A549 (cell line): ENCODE measurements at regions of chr19 and their contacts with region 1.

Region 1: DNA sequence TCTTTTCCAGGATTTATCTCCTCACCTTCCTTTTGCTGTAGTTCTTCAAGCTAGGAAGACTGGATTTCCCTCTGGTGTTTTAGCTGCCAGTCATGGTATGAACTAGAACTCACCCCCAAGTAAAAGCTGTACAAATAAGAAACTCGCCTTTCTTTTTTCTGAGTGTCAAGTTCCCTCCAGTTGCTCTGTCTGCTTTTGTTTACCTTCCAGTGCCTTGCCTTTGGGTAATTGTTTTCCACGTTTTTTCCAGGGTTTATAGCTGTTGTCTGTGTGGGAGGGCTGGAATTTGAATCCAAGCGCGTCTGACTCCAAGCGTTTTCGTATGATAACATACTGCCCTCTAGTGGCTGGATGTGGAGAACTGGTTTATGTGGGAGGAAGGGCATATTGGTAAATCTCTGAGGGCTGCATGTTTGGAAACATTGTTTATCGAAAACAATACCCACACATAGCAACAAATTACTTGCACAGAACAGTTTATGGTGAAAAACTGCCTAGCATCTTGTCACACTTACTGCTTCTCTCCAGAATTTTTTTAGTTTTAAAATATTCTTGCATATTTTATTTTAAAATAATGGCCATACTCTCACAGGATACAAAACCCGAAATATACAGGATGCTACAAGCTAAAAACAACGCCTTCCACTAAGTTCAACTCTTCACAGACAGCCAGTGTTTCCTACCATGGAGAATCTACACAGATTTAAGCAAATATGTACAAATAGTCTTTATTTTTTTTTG is 19.2 kb downstream of the RCN3 start:
- DNase-seq: peak; percentile 91 to 94
- ATAC-seq: peak; percentile 88 to 89
- H3K4me3 ChIP-seq: peak overlapping the region; percentile 23; the same call in 1 of the 3 replicates
- H3K27ac ChIP-seq: peak overlapping the region in 1 of 2 experiments; percentile 29; a peak in 3 of 6 replicates
- H3K4me1 ChIP-seq: 0 out of 3 replicates have a peak, but pooled peaks cover 3% of the 10 kb centered on the region
- CTCF ChIP-seq: peak; percentile 97
- EP300 ChIP-seq: no peak
- POLR2A ChIP-seq: no peak
- RAD21 ChIP-seq: peak; percentile 94 to 98

Region 2: DNA sequence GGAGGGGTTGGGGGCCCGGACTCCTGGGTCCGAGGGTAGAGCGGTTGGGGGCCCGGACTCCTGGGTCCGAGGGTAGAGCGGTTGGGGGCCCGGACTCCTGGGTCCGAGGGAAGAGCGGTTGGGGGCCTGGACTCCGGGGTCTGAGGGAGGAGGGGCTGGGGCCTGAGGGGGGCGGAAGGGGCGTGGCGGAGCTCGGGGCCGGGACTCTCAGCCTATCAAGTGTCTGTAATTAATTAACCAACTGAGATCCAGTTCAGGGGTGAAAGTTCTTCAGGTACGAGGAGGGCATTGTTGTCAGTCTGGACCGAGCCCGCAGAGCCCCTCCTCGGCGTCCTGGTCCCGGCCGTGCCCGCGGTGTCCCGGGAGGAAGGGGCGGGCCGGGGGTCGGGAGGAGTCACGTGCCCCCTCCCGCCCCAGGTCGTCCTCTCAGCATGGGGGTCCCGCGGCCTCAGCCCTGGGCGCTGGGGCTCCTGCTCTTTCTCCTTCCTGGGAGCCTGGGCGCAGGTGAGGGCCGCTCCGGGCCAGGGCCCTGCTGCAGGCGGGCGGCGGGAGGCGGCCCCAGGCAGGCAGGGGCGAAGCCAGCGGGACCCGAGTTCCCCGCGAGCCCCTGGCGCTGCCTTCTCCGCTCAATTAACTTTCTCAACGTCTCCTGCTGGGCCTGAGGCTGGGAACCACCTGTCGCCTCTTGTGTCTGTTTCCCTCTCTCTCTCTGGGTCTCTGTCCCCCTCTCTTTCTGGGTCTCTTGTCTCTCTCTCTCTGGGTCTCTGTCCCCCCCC is 33.8 kb before region 1 on chr19:
- CTCF ChIA-PET with region 1: interaction called, 42 read pairs
- POLR2A ChIA-PET with region 1: no interaction called
- DNase-seq: no peak
- ATAC-seq: peak; percentile 71 to 78
- H3K4me3 ChIP-seq: peak overlapping the region; percentile 82
- H3K27ac ChIP-seq: peak overlapping the region; percentile 85 to 94
- H3K4me1 ChIP-seq: peaks cover 15% of the 10 kb centered on the region
- CTCF ChIP-seq: no peak
- EP300 ChIP-seq: no peak
- POLR2A ChIP-seq: no peak
- RAD21 ChIP-seq: no peak

Region 3: DNA sequence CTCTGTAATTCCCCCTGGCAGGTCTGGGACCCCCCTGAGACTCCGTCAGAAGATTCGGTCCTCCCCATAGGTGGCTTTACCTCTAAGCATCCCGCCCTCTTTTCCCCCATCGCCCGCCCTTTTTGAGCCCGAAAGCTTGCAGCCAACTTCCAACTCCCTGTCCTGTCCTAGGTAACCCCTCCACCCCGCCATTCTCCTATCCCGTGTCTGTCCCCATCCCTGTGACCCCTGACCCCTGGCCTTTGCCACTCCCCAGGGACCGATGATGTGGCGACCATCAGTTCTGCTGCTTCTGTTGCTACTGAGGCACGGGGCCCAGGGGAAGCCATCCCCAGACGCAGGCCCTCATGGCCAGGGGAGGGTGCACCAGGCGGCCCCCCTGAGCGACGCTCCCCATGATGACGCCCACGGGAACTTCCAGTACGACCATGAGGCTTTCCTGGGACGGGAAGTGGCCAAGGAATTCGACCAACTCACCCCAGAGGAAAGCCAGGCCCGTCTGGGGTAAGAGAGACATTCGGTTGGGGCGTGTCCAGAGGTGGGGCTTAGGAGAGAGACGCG is 18.7 kb before region 1 on chr19:
- CTCF ChIA-PET with region 1: interaction called, 84 read pairs
- POLR2A ChIA-PET with region 1: no interaction called
- DNase-seq: no peak
- ATAC-seq: no peak
- H3K4me3 ChIP-seq: peak overlapping the region; percentile 39; the same call in 2 of the 3 replicates
- H3K27ac ChIP-seq: peak overlapping the region in 1 of 2 experiments; percentile 62; a peak in 2 of 6 replicates
- H3K4me1 ChIP-seq: peaks cover 3% of the 10 kb centered on the region; the same call in 1 of the 3 replicates
- CTCF ChIP-seq: no peak
- EP300 ChIP-seq: no peak
- POLR2A ChIP-seq: no peak
- RAD21 ChIP-seq: no peak

Region 4: GRCh38 chr19:49580264-49581006 is 33.4 kb after region 1 on chr19 and contains the start of gene NOSIP:
- CTCF ChIA-PET with region 1: interaction called, 426 read pairs
- POLR2A ChIA-PET with region 1: interaction called, 3 read pairs
- DNase-seq: peak; percentile 94 to 99
- ATAC-seq: peak; percentile 98 to 99
- H3K4me3 ChIP-seq: peak within 1 kb of the TSS; percentile 63
- H3K27ac ChIP-seq: peak within 1 kb of the TSS; percentile 68 to 88
- H3K4me1 ChIP-seq: peaks cover 8% of the 10 kb centered on the region; the same call in 2 of the 3 replicates
- CTCF ChIP-seq: no peak
- EP300 ChIP-seq: no peak
- POLR2A ChIP-seq: peak; percentile 99
- RAD21 ChIP-seq: 0 out of 5 replicates have a peak, but pooled peaks of 1 of the 2 experiments have one; percentile 4
- polyA plus RNA-seq, gene NOSIP: 49.0 and 52.5 TPM in 2 replicates

Region 5: GRCh38 chr19:49690656-49691242 is 143.8 kb after region 1 on chr19 and contains the start of gene CPT1C:
- CTCF ChIA-PET with region 1: no interaction called
- POLR2A ChIA-PET with region 1: no interaction called
- DNase-seq: no peak
- ATAC-seq: peak; percentile 3; a peak in 1 of 6 replicates
- H3K4me3 ChIP-seq: no peak within 1 kb of the TSS
- H3K27ac ChIP-seq: no peak within 1 kb of the TSS
- H3K4me1 ChIP-seq: 0 out of 3 replicates have a peak, but pooled peaks cover 9% of the 10 kb centered on the region
- CTCF ChIP-seq: no peak
- EP300 ChIP-seq: no peak
- POLR2A ChIP-seq: no peak
- RAD21 ChIP-seq: no peak
- polyA plus RNA-seq, gene CPT1C: 8.2 and 8.5 TPM in 2 replicates